Panc1 (cell line): ENCODE measurements at regions of chr7 and their contacts with region 1.

Region 1: DNA sequence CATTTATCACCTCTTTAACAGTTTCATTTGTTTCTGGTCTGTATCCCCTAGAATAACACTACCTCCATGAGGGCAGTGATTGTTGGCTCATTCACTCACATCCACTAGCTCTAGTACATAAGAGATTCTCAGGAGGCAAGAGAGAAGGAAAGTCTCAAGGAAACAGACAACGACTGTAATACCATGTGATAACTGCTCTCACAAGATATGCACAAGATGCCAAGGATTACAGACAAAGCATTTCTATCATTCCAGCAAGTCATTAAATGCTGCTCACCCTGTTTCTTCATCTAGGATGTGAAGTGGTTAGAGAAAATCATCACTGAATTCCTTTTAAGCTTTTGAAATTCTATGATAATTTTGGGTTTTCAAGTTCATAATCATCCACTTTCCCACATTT is 115.3 kb downstream of the HIBADH start:
- DNase-seq: no peak
- ATAC-seq: no peak
- H3K4me3 ChIP-seq: no peak overlapping the region
- H3K27ac ChIP-seq: no peak overlapping the region
- H3K4me1 ChIP-seq: no peaks in the 10 kb centered on the region
- H3K27me3 ChIP-seq: no peaks in the 10 kb centered on the region
- CTCF ChIP-seq: no peak

Region 2: DNA sequence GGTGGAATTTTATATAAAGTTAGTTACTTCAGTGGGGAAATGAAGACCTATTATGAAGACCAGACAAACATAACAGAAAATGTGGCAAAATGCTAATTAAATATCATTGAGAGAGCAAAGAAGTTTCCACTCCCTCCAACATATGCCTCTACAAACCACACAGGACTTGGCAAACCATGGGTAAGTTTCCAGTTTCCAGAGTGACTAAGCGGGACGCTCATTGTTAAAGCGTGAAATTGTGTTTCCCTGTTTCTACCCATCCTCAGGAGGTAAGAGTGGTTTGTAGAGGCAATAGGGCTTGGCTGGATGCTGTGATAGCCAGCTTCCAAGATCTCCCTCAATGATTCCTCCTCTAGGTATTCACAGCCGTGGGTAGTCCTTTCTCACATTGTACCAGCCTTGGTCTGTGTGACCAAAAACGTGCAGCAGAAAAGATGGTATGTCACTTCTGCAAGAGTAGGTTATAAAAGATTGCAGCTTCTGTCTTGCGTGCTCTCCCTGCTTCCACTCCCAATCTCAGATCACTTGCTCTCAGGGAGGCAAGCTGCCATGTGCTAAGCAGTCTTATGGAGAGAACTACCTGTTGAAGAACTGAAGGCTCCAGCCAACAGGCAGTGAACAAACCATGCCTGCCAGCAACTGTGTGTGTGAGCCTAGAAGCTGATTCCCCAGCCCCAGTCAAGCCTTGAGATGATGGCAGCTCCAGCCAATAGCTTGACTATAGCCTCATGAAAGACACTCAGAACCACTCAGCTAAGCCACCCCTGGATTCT is 1310.2 kb before region 1 on chr7:
- CTCF ChIA-PET with region 1: no interaction called
- POLR2A ChIA-PET with region 1: interaction called, 11 read pairs
- in situ Hi-C with region 1: no loop called
- intact Hi-C with region 1: no loop called
- DNase-seq: no peak
- ATAC-seq: peak; percentile 66
- H3K4me3 ChIP-seq: no peak overlapping the region
- H3K27ac ChIP-seq: no peak overlapping the region
- H3K4me1 ChIP-seq: no peaks in the 10 kb centered on the region
- H3K27me3 ChIP-seq: no peaks in the 10 kb centered on the region; the same call in 1 of the 2 replicates
- CTCF ChIP-seq: no peak